Posterior vena cava (tissue), 2 donors: ENCODE measurements at regions of chr10 and their contacts with region 1.

Region 1: DNA sequence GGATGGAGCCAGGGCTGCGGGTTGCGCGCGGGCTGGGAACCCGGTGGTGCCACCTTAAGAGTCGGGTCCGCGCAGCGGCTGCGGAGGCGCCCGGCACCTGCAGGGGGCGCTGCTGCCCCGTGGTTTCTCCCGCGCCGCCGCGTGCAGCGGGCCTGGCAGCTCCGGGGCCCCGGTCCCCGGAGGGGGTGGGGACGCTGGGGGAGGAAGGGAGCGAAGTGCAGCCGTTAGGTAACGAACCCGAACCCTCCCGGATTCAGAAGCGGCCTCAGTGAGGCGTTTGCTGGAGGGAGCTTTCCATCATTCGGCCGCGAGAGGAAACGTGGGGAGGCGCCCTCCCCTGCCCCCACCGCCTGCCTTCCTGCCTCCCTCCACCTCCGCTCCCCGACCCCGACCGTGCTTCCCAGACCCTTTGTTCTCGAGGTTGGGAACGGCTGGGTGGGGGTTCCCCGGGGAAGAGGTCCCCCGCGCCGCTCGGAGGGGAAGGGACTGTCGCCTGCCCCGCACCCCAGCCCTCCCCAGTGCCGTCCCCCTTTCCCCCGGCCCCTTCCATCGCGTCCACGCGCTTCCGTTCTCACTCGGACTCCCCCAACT is 29.6 kb downstream of the SKIDA1 start:
- DNase-seq: peak; percentile 95

Region 2: DNA sequence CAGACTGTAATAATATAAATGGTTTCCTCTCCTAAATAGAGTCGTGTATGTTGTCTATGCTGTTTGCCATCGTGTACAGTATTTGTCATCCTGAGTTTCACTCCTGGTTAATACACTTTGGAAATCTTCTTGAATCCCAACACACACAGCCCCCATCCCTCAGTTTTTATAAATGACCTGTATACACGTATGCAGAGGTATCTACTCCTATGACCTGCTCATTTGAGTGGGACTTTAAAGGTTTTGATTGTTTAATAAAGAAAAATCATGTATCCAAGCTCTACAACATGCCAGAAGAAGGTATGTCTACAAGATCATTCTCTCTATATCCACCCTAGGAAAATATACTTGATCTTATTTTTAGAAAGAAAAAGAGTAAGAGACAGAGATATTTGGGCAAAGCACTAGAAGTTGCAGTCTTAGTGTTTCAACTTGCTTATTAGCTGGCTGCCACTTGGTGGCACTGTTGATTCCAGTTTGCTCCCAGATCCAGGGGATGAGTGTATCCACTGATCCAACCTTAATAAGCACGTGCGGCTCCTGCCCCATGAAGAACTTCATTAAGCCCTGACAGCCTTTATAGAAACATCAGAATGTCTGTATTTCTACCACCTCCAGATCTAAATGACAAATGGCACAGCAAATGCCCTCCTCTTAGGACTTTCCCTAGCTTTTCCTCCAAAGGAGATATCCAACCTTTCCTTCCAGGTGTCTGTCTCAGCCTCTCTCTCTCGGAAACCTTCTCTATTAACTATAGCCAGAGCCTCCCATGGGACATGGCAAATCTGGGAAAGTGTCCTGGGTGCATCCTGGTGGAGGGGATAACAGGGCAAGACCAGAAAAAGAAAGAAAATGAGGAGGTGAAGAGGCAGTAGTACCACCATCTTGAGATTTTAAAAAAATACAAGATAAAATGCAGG is 417.2 kb before region 1 on chr10:
- intact Hi-C with region 1: loop called in 1 of 2 experiments (anchors 10 kb)
- DNase-seq: no peak

Region 3: GRCh38 chr10:21278491-21279239 is 217.2 kb before region 1 on chr10:
- intact Hi-C with region 1: loop called (anchors 10 kb)
- DNase-seq: peak; percentile 97

Region 4: DNA sequence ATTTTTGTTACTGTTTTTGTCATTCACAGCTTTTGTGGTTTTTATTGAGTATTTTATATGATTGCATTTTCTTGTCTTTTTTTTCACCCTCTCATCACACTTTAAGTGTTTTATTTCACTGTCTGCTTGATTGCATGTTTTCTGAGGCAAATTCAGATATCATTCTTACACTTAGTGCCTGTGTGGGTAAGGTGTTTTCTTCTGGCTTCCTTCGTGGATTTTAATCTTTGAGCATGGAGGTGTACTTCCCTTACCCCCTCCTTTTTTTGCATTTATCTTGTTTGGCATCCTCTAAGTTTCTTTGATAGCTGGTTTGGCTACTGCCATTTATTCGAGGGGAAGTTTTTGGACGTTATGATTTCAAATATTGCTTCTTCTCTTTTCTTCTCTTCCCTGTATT is 166.1 kb after region 1 on chr10:
- intact Hi-C with region 1: no loop called
- DNase-seq: no peak

Region 5: GRCh38 chr10:21732067-21732772 is 236.4 kb after region 1 on chr10:
- intact Hi-C with region 1: loop called (anchors 10 kb)
- DNase-seq: peak; percentile 82